Pancreas (tissue), 10 donors: ENCODE measurements at regions of chr17 and their contacts with region 1.

Region 1: GRCh38 chr17:49031965-49032928 is 35.1 kb downstream of the IGF2BP1 start:
- DNase-seq: peak in 3 of 6 donors; percentile 23 to 55 (median 33)
- ATAC-seq: peak; percentile 89 to 95 (median 90)
- H3K4me3 ChIP-seq: no peak overlapping the region
- H3K27ac ChIP-seq: no peak overlapping the region
- H3K4me1 ChIP-seq: no peaks in the 10 kb centered on the region
- H3K27me3 ChIP-seq: peaks cover 0 to 6% (median 0%) of the 10 kb centered on the region in 4 donors
- CTCF ChIP-seq: peak; percentile 52 to 78 (median 60)

Region 2: GRCh38 chr17:48724251-48725003 is 307.8 kb before region 1 on chr17:
- intact Hi-C with region 1: loop called in 1 of 3 experiments (anchors 10 kb)
- DNase-seq: peak; percentile 72 to 95 (median 86)
- ATAC-seq: peak; percentile 82 to 94 (median 92)
- H3K4me3 ChIP-seq: no peak overlapping the region
- H3K27ac ChIP-seq: no peak overlapping the region
- H3K4me1 ChIP-seq: peaks cover 0 to 5% (median 0%) of the 10 kb centered on the region in 3 donors
- H3K27me3 ChIP-seq: peaks cover 8 to 81% (median 26%) of the 10 kb centered on the region in 4 donors
- CTCF ChIP-seq: peak in 3 of 4 donors; percentile 61

Region 3: GRCh38 chr17:49071106-49071505 is 38.9 kb after region 1 on chr17:
- intact Hi-C with region 1: no loop called
- DNase-seq: no peak
- ATAC-seq: no peak
- H3K4me3 ChIP-seq: no peak overlapping the region
- H3K27ac ChIP-seq: no peak overlapping the region
- H3K4me1 ChIP-seq: no peaks in the 10 kb centered on the region
- H3K27me3 ChIP-seq: no peaks in the 10 kb centered on the region
- CTCF ChIP-seq: no peak

Region 4: DNA sequence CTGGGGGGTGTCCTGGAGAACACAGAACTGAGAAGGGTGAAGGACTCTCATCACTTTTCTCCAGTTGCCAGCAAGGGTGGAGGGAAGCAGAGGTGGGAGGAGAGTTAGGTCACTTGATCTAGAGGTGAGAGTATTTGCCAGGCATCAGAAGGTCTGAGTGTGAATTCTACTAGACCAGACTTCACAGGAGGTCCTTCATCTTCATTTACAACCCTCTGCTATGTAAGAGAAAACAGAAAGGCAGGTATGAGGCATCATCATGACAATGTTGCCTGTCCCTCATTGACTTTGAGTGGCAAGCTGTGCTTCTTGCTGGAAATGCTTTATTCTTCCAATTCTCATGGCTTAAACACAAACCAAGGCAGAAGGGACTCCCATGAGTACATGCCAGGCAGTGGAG is 54.4 kb after region 1 on chr17:
- intact Hi-C with region 1: no loop called
- DNase-seq: no peak
- ATAC-seq: no peak
- H3K4me3 ChIP-seq: no peak overlapping the region
- H3K27ac ChIP-seq: no peak overlapping the region
- H3K4me1 ChIP-seq: no peaks in the 10 kb centered on the region
- H3K27me3 ChIP-seq: no peaks in the 10 kb centered on the region
- CTCF ChIP-seq: no peak

Region 5: DNA sequence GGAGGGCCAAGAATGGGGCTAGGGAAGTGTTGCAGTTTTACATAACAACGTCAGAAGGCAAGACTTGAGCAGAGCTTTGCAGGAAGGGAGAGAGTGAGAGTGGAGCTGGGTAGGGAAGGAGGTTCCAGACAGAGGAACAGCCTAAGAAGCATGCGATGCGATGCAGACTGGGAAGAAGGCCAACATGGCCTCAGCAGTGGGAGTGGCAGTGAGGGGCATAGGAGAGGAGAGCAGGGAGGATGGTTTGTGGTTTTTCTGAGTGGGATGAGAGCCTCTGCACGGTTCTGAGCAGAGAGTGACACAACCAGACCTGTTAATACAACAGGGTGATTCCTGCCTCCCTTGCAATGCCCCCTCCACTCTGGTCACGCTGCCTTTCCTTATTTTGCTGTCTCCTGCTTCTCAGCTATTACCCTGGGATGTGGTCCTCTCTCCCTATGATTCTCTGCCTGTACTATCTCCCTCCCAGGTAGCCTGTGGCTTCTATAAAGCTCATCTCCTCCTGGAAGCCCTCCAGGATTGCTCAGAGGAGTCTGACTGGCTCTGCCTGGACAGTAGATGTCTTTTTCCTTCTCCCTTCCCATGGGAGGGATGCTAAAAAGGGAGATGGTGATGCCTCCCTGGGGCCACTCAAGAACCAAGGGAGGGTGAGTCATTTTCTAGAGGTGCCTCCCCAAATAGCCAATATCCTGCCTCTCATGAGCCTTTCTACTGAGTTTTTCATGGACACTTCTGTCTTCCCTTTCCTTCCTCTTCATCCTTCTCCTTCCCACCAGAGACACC is 424.1 kb after region 1 on chr17:
- intact Hi-C with region 1: no loop called
- DNase-seq: no peak
- ATAC-seq: peak in 1 of 4 donors; percentile 22
- H3K4me3 ChIP-seq: no peak overlapping the region
- H3K27ac ChIP-seq: no peak overlapping the region
- H3K4me1 ChIP-seq: no peaks in the 10 kb centered on the region
- H3K27me3 ChIP-seq: peaks cover 0 to 4% (median 0%) of the 10 kb centered on the region in 4 donors
- CTCF ChIP-seq: no peak